ENCODE measurements at regions of chr10 and their contacts with region 1.

Region 1: DNA sequence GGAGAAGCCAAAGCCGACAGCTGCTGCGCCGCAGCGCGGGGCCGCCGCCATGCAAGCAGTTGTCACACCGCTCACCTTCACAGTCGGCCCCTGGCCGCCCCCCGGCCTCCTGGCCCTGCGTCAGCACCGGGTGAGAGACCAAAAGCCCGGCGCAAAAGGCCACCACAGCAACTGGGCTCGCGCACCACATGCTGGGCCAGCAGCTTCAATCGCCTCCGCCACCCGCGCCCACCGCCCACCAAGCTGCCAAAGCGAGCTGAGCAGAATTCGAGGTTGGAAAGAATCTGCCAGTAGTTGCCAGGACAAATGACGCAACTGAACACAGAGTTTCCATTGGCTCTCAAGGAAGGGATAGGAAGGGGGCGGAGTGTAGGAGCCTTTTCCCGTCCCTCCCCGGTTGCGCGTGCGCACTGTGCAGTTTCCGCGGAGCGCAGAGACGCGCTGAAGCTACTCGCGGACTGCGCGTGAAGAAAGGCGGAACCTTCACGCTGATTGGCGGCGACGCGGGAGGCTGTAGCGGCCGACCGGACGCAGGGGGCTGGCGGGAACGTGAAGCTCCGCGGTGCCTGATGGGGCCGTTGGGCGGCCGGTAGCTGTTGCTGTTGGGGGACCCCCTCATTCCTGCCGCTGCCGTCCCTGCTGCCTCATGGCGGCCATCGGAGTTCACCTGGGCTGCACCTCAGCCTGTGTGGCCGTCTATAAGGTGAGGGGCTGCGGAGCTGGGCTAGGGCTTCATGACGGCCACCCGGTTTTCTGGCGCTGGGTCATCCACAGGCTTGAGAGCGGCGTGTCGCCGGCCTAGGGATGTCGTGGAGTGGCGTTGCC is at the starts of genes CDNF, HSPA14 and MSANTD7:
- DNase-seq: peak; percentile 92 to 99
- H3K4me3 ChIP-seq: peak within 1 kb of the TSS; percentile 85 to 86
- H3K27ac ChIP-seq: peak within 1 kb of the TSS; percentile 94 to 97
- H3K4me1 ChIP-seq: peaks cover 0 to 7% of the 10 kb centered on the region in 2 donors
- H3K27me3 ChIP-seq: no peaks in the 10 kb centered on the region
- CTCF ChIP-seq: no peak
- total RNA-seq, gene CDNF: not detected
- total RNA-seq, gene HSPA14: 26.3 TPM
- total RNA-seq, gene MSANTD7: 0.64 TPM

Region 2: GRCh38 chr10:14604181-14605142 is 233.5 kb before region 1 on chr10:
- intact Hi-C with region 1: loop called (anchors 1 kb)
- DNase-seq: peak; percentile 22 to 90
- H3K4me3 ChIP-seq: peak overlapping the region; percentile 78 to 90
- H3K27ac ChIP-seq: peak overlapping the region; percentile 69 to 79
- H3K4me1 ChIP-seq: peaks cover 0 to 12% of the 10 kb centered on the region in 2 donors
- H3K27me3 ChIP-seq: no peaks in the 10 kb centered on the region
- CTCF ChIP-seq: no peak

Region 3: DNA sequence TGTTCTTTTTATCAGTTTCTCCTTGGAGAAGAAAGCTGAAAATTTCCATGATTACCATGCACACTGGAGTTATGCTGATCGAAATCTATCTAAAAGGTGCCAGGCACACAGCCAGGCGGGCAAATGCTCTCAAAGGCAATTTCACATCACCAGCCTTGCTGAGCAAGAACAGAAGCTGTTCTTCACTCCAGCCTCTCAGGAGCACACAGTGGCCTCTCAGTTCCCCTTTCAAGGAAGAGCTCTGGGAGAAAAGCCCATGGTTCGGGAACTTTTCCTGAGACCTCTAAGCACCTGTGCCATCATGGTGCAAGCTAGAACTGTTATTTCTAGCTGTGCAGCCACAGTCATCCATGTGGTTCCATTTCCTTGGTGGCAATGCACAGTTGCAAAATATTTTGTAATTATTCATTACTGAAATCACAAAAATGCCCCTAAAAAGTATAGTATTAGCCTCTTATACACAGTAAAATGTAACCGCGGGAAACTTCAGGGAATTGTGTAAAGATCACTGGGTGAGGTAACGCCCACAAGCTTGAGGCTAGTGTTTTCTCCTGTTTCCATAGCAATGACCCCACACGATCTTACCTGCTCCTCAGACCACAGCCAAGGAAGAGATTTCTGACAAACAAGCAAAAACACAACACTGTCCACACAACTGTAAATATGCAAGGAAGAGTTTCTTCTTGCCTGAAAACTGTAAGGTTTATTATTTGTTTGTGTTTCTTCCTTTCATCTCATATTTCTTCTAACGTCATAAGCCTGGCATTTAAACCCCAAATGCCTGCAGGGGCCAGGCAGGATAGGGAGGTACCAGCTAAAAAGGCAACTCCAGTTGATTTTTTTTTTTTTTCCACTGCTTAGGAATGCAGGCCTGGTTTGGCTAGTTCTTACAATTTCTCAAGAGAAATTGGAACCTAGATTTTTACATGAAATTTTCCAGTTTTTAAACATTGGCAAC is 184.4 kb before region 1 on chr10:
- intact Hi-C with region 1: loop called (anchors 2 kb)
- DNase-seq: no peak
- H3K4me3 ChIP-seq: peak overlapping the region in 1 of 2 donors; percentile 7
- H3K27ac ChIP-seq: peak overlapping the region; percentile 67 to 80
- H3K4me1 ChIP-seq: peaks cover 8 to 17% of the 10 kb centered on the region in 2 donors
- H3K27me3 ChIP-seq: no peaks in the 10 kb centered on the region
- CTCF ChIP-seq: no peak

Region 4: DNA sequence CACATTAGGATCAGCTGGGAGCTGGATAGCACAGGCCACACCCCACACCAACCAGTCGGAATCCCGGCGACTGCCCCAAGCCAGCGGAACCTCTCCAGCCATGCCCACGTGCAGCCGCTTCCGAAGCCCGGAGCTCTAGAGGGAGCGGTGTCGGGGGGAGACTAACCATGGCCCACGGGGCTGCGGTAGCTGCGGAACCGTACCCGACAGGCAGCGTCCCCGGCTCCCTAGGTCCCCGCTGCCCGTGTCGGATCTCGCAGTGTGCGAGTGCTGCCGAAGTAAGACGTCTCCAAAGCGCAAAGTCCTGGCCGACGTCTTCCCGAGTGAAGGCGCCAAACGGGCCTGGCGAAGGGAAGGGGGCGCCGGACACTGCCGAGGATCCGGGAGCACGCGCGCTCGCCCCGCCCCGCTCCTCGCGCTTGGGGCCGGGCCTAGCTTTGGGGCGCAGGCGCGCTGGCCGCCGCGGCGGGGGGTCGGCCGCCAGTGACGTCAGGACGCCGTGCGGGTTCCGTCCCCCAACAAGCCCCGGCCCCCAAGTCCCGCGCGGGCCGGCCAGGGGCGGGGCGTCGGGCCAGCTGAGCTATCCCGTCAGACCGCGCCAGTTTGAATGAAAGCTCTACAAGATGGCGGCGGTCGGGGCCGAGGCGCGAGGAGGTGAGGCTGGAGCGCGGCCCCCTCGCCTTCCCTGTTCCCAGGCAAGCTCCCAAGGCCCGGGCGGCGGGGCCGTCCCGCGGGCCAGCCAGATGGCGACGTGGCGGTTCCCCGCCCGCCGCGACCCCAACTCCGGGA is 40.5 kb after region 1 on chr10 and contains the start of gene SUV39H2:
- intact Hi-C with region 1: loop called (anchors 1 kb)
- DNase-seq: peak; percentile 86 to 97
- H3K4me3 ChIP-seq: peak within 1 kb of the TSS; percentile 79 to 92
- H3K27ac ChIP-seq: peak within 1 kb of the TSS; percentile 85 to 92
- H3K4me1 ChIP-seq: peaks cover 0 to 4% of the 10 kb centered on the region in 2 donors
- H3K27me3 ChIP-seq: no peaks in the 10 kb centered on the region
- CTCF ChIP-seq: no peak
- total RNA-seq, gene SUV39H2: not detected

Region 5: GRCh38 chr10:15097011-15097812 is 259.2 kb after region 1 on chr10 and contains the start of gene RPP38:
- intact Hi-C with region 1: loop called (anchors 5 kb)
- DNase-seq: peak; percentile 78 to 97
- H3K4me3 ChIP-seq: peak within 1 kb of the TSS; percentile 72 to 97
- H3K27ac ChIP-seq: peak within 1 kb of the TSS; percentile 85 to 97
- H3K4me1 ChIP-seq: peaks cover 6 to 22% of the 10 kb centered on the region in 2 donors
- H3K27me3 ChIP-seq: no peaks in the 10 kb centered on the region
- CTCF ChIP-seq: no peak
- total RNA-seq, gene RPP38: not detected

Region 6: GRCh38 chr10:15262036-15262713 is 424.2 kb after region 1 on chr10:
- intact Hi-C with region 1: no loop called
- DNase-seq: no peak
- H3K4me3 ChIP-seq: no peak overlapping the region
- H3K27ac ChIP-seq: no peak overlapping the region
- H3K4me1 ChIP-seq: no peaks in the 10 kb centered on the region
- H3K27me3 ChIP-seq: no peaks in the 10 kb centered on the region
- CTCF ChIP-seq: peak in 2 of 3 experiments; percentile 32 to 50

Measured in ascending aorta (tissue), 2 donors.